MCF 10A (cell line): ENCODE measurements at regions of chr4 and their contacts with region 1.

Region 1: DNA sequence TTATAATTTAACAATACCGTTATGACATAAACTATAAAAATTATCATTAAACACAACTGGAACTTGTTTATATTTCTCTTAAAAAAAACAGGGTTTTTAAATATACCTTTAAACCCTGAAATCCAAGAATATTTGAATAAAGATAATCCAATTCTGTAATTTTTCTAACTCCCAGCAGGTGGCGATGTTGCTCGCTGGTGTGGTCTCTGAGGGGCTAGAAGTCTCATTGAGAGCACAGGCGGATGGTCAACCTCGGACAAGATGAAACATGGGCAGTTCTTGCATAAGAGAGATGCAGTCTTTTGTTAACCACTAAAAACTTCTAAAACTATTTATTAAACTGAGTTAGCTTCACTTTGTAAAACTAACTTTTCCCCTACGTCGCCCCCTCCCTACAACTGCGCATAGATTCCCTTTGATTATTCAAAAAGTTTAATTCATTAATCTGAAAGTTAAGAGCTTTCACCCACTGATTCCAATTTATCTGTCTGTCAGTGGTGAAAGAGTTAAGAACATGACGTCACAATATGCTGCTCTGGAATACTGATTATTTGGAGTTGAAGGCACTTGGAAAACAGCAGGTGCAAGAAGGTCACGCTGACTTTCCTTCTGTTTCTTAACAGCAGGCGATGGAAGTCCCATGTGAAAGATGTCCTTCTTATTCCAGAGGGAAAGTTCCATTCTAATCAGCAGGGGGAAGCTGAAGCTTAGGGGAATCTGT is 29.5 kb downstream of the DMP1 start:
- DNase-seq: peak; percentile 65
- H3K4me3 Mint-ChIP-seq: no peak overlapping the region
- H3K27ac Mint-ChIP-seq: no peak overlapping the region
- H3K4me1 Mint-ChIP-seq: no peaks in the 10 kb centered on the region
- H3K27me3 Mint-ChIP-seq: no peaks in the 10 kb centered on the region
- CTCF ChIP-seq: peak; percentile 76

Region 2: GRCh38 chr4:87270144-87270543 is 409.5 kb before region 1 on chr4:
- CTCF ChIA-PET with region 1: no interaction called
- POLR2A ChIA-PET with region 1: no interaction called
- intact Hi-C with region 1: loop called (anchors 2 kb)
- DNase-seq: peak; percentile 63
- H3K4me3 Mint-ChIP-seq: no peak overlapping the region
- H3K27ac Mint-ChIP-seq: no peak overlapping the region
- H3K4me1 Mint-ChIP-seq: no peaks in the 10 kb centered on the region
- H3K27me3 Mint-ChIP-seq: no peaks in the 10 kb centered on the region
- CTCF ChIP-seq: peak; percentile 59

Region 3: DNA sequence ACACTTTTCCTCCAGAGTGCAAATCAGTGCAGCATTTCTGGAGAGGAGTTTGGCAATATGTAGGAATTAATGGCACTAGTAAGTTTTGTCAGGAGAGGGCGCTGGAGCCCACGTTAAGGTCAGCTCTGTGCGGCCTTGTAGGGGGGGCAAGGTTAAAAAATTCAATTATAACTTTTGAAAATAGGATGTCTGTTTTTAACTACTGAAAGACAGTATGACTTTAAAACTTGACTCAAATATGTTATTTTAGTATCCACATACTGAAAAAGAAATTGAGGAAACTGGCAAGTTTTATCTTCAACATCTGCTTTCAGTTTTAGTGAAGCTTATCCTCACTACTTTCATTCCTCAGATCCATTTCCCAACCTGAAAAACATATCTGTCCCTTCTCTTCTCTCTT is 326.0 kb before region 1 on chr4:
- CTCF ChIA-PET with region 1: no interaction called
- POLR2A ChIA-PET with region 1: no interaction called
- intact Hi-C with region 1: loop called (anchors 10 kb)
- DNase-seq: peak; percentile 71
- H3K4me3 Mint-ChIP-seq: no peak overlapping the region
- H3K27ac Mint-ChIP-seq: peak overlapping the region; percentile 79
- H3K4me1 Mint-ChIP-seq: peaks cover 18% of the 10 kb centered on the region
- H3K27me3 Mint-ChIP-seq: no peaks in the 10 kb centered on the region
- CTCF ChIP-seq: peak; percentile 77

Region 4: DNA sequence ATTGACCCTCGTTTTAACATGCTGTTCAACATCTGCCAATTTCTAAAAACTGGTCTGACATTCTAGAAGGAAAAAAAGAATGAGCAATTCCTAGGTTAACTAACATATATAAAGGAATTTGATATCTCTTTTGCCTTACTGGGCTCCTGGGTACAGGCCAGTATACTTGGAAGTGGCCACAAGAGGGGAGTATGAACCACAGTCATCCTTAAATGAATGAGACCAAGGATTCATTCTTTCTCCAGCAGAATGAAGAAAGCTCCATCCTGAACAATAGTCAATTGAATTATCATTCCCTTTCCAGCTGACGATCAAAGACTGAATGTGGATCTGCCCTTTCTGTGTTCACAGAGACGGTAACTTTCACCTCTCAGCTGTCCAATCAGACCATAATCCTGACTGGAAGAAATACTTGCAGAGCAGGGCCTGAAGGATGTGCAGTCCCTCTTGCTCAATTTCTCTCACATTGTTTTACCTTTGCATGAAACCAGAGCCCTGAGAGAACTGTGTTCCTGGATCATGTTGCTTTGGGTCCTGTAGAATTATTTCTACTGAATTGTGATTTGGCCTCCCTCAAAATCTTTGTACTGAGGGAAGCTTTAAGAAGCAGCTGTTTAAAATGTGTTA is 135.7 kb before region 1 on chr4:
- CTCF ChIA-PET with region 1: interaction called, 13 read pairs
- POLR2A ChIA-PET with region 1: interaction called, 4 read pairs
- intact Hi-C with region 1: loop called (anchors 1 kb)
- DNase-seq: peak; percentile 74
- H3K4me3 Mint-ChIP-seq: no peak overlapping the region
- H3K27ac Mint-ChIP-seq: no peak overlapping the region
- H3K4me1 Mint-ChIP-seq: no peaks in the 10 kb centered on the region
- H3K27me3 Mint-ChIP-seq: no peaks in the 10 kb centered on the region
- CTCF ChIP-seq: peak; percentile 53

Region 5: DNA sequence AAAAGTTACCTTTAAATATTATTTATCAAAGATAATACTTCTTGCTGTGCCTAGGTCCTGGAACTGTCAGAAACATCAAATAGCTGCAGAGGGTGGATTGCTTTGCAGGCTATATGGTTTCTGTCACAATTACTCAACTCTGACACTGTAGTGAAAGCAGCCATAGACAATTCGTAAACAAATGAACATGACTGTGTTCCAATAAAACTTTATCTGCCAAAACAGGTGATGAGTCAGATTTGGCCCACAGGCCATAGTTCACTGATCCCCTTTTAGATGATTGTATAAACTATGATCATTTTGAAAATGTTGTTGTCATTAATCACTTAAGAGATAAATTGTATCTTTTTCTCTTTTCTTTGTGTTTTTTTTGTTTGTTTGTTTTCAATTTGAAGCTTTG is 144.7 kb after region 1 on chr4:
- CTCF ChIA-PET with region 1: interaction called, 10 read pairs
- POLR2A ChIA-PET with region 1: no interaction called
- intact Hi-C with region 1: no loop called
- DNase-seq: no peak
- H3K4me3 Mint-ChIP-seq: no peak overlapping the region
- H3K27ac Mint-ChIP-seq: no peak overlapping the region
- H3K4me1 Mint-ChIP-seq: peaks cover 8% of the 10 kb centered on the region
- H3K27me3 Mint-ChIP-seq: no peaks in the 10 kb centered on the region
- CTCF ChIP-seq: no peak

Region 6: GRCh38 chr4:87838890-87839591 is 159.4 kb after region 1 on chr4:
- CTCF ChIA-PET with region 1: interaction called, 77 read pairs
- POLR2A ChIA-PET with region 1: interaction called, 3 read pairs
- intact Hi-C with region 1: loop called (anchors 1 kb)
- DNase-seq: peak; percentile 49
- H3K4me3 Mint-ChIP-seq: no peak overlapping the region
- H3K27ac Mint-ChIP-seq: no peak overlapping the region
- H3K4me1 Mint-ChIP-seq: peaks cover 10% of the 10 kb centered on the region
- H3K27me3 Mint-ChIP-seq: no peaks in the 10 kb centered on the region
- CTCF ChIP-seq: peak; percentile 75

Region 7: GRCh38 chr4:87973283-87974169 is 293.9 kb after region 1 on chr4:
- CTCF ChIA-PET with region 1: interaction called, 3 read pairs
- POLR2A ChIA-PET with region 1: no interaction called
- intact Hi-C with region 1: loop called (anchors 5 kb)
- DNase-seq: peak; percentile 70
- H3K4me3 Mint-ChIP-seq: peak overlapping the region; percentile 19
- H3K27ac Mint-ChIP-seq: no peak overlapping the region
- H3K4me1 Mint-ChIP-seq: peaks cover 11% of the 10 kb centered on the region
- H3K27me3 Mint-ChIP-seq: no peaks in the 10 kb centered on the region
- CTCF ChIP-seq: peak; percentile 84